Activated naive CD4-positive, alpha-beta T cell treated with anti-CD3 and anti-CD28 coated beads for 36 hours (primary cell): ENCODE measurements at regions of chr2 and their contacts with region 1.

Region 1: GRCh38 chr2:169069341-169069740 is at the start of gene DHRS9:
- DNase-seq: peak; percentile 63
- H3K4me3 Mint-ChIP-seq: peak within 1 kb of the TSS; percentile 37
- H3K27ac Mint-ChIP-seq: no peak within 1 kb of the TSS
- H3K4me1 Mint-ChIP-seq: peaks cover 39% of the 10 kb centered on the region
- H3K27me3 Mint-ChIP-seq: peaks cover 2% of the 10 kb centered on the region
- total RNA-seq, gene DHRS9: 2.0 to 2.6 TPM

Region 2: GRCh38 chr2:168773719-168774521 is 295.4 kb before region 1 on chr2:
- CTCF ChIA-PET with region 1: no interaction called
- intact Hi-C with region 1: no loop called
- DNase-seq: peak; percentile 21
- H3K4me3 Mint-ChIP-seq: no peak overlapping the region
- H3K27ac Mint-ChIP-seq: no peak overlapping the region
- H3K4me1 Mint-ChIP-seq: no peaks in the 10 kb centered on the region
- H3K27me3 Mint-ChIP-seq: no peaks in the 10 kb centered on the region

Region 3: DNA sequence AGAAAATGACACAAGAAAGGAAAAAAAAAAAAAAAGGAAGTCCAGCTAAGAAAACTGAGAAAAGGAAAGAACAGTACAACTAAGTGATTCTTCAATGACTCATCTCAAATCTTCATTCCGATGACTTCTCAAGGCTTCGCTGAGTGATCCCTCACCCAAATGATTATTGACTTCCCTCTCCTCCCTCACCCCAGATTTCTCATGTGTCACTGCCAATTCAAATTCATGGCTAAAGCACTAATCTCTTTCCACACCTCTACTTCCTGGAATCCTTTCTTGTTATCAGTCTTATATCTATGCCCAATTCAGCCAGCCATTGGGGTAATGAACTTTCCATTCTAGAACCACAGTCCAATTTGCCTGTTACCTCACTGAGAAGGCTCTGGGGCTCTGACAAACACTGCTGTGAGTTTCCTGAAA is 31.0 kb before region 1 on chr2:
- CTCF ChIA-PET with region 1: no interaction called
- intact Hi-C with region 1: loop called (anchors 1 kb)
- DNase-seq: no peak
- H3K4me3 Mint-ChIP-seq: no peak overlapping the region
- H3K27ac Mint-ChIP-seq: no peak overlapping the region
- H3K4me1 Mint-ChIP-seq: peaks cover 4% of the 10 kb centered on the region
- H3K27me3 Mint-ChIP-seq: peaks cover 3% of the 10 kb centered on the region

Region 4: DNA sequence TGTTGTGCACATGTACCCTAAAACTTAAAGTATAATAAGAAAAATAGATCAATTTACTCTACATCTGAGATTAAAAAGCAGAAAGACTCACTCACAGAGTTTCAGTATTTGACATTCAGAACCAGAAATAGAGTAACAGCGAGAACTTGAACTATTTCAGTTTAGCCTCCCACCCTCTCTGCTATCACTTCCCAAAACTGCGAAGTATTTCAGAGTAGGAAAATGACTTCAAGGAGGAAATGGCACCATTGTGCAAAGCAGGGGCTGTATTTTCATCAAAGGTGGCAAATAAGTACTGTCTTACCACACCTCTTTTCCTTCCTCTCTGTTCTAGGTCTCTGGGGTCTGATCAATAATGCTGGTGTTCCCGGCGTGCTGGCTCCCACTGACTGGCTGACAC is 13.7 kb after region 1 on chr2:
- CTCF ChIA-PET with region 1: no interaction called
- intact Hi-C with region 1: loop called (anchors 1 kb)
- DNase-seq: peak; percentile 10
- H3K4me3 Mint-ChIP-seq: no peak overlapping the region
- H3K27ac Mint-ChIP-seq: no peak overlapping the region
- H3K4me1 Mint-ChIP-seq: peaks cover 4% of the 10 kb centered on the region
- H3K27me3 Mint-ChIP-seq: no peaks in the 10 kb centered on the region

Region 5: GRCh38 chr2:169095621-169096105 is 26.3 kb after region 1 on chr2:
- CTCF ChIA-PET with region 1: no interaction called
- intact Hi-C with region 1: loop called (anchors 2 kb)
- DNase-seq: peak; percentile 35
- H3K4me3 Mint-ChIP-seq: no peak overlapping the region
- H3K27ac Mint-ChIP-seq: no peak overlapping the region
- H3K4me1 Mint-ChIP-seq: peaks cover 17% of the 10 kb centered on the region
- H3K27me3 Mint-ChIP-seq: peaks cover 7% of the 10 kb centered on the region